ENCODE measurements at regions of chr10 and their contacts with region 1.

Region 1: GRCh38 chr10:4849555-4850242 is 23.7 kb downstream of the AKR1E2 start:
- DNase-seq: peak; percentile 94 to 97 (median 95)
- H3K4me3 ChIP-seq: peak overlapping the region in 2 of 7 experiments; percentile 48
- H3K27ac ChIP-seq: peak overlapping the region in 1 of 2 experiments; percentile 58
- H3K4me1 ChIP-seq: peaks cover 0 to 23% (median 12%) of the 10 kb centered on the region in 4 experiments
- H3K27me3 ChIP-seq: no peaks in the 10 kb centered on the region

Region 2: DNA sequence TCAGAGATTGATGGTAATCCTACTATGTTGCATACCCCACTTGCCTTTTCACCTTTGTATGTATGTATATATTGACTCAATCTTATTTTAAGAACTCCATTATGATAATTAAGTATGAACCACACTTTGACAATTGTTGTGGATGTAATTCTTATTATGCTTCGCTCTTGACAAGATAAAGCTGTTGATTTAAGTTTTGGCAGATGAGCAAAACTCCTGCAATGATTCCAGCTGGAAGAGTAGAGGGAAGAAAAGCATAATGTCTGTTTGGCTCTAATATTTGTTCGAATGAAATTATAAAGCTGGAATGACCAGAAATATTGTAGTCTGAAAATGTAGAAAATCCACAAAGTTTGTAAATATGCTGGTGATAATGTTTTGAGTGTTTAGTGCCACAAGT is 107.5 kb before region 1 on chr10:
- CTCF ChIA-PET with region 1: no interaction called
- POLR2A ChIA-PET with region 1: no interaction called
- DNase-seq: no peak
- H3K4me3 ChIP-seq: no peak overlapping the region
- H3K27ac ChIP-seq: no peak overlapping the region
- H3K4me1 ChIP-seq: no peaks in the 10 kb centered on the region
- H3K27me3 ChIP-seq: no peaks in the 10 kb centered on the region

Region 3: GRCh38 chr10:4830551-4830950 is 19.1 kb before region 1 on chr10:
- CTCF ChIA-PET with region 1: interaction called, 53 read pairs
- POLR2A ChIA-PET with region 1: no interaction called
- DNase-seq: no peak
- H3K4me3 ChIP-seq: no peak overlapping the region
- H3K27ac ChIP-seq: no peak overlapping the region
- H3K4me1 ChIP-seq: peaks cover 0 to 9% (median 7%) of the 10 kb centered on the region in 4 experiments
- H3K27me3 ChIP-seq: no peaks in the 10 kb centered on the region

Region 4: DNA sequence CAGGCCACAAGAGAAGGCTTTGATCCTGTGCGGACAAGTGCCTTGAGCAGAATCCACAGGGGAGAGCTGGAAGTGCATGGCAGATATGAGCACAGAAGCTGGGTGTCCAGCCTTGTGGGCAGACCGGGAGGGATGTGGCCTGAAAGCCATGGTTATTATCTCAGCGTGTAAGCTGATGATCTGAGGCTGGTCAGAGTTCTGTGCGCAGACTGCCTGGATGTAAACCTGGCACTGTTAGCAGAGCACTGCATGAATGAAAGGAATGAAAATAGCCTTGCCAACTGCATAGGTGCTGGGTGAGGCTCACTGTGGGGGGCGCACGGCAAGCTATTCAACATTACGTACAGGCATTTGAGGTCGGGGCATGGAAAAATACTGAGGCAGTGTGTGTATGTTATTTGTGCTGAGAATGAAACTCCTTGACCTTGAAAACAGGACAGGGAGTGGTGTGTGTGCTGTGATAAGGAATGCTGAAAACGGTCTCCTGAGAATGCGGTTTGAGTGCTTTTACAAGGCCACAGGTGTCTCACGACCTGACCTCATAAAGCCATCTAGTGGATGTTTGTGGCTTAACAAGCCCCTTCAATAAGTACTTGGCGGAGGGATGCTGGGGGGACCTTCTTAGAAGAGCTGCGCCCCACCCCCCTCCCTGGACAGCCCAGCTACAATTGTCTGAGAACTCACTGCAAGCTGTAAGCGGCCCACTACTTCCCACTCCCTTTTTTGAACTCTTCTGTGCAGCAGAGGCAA is 132.2 kb after region 1 on chr10:
- CTCF ChIA-PET with region 1: interaction called, 79 read pairs
- POLR2A ChIA-PET with region 1: no interaction called
- DNase-seq: peak; percentile 68 to 86 (median 80)
- H3K4me3 ChIP-seq: peak overlapping the region in 3 of 7 experiments; percentile 2 to 48 (median 26)
- H3K27ac ChIP-seq: no peak overlapping the region
- H3K4me1 ChIP-seq: peaks cover 0 to 8% (median 6%) of the 10 kb centered on the region in 4 experiments
- H3K27me3 ChIP-seq: no peaks in the 10 kb centered on the region

Region 5: DNA sequence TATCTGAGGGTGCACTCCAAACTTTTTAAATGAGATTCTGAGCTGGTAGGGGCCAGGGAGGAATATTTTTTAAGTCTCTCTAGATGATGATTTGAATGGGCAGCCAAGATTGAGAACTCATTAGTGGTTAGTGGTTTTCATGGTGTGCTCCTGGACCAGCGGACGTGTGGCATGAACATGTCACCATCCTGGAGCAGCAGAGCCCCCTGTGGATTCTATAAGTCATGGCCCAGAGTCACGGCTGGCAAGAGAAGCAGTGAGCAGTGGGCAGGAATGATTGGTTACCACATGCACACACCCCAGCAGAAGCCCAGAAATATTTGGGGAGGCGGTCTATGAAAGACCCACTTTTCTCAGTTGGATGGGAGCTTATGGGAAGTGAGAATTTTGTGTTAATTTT is 493.9 kb after region 1 on chr10:
- CTCF ChIA-PET with region 1: interaction called, 10 read pairs
- POLR2A ChIA-PET with region 1: no interaction called
- DNase-seq: peak; percentile 32 to 67 (median 59)
- H3K4me3 ChIP-seq: no peak overlapping the region
- H3K27ac ChIP-seq: no peak overlapping the region
- H3K4me1 ChIP-seq: no peaks in the 10 kb centered on the region
- H3K27me3 ChIP-seq: no peaks in the 10 kb centered on the region

Region 6: DNA sequence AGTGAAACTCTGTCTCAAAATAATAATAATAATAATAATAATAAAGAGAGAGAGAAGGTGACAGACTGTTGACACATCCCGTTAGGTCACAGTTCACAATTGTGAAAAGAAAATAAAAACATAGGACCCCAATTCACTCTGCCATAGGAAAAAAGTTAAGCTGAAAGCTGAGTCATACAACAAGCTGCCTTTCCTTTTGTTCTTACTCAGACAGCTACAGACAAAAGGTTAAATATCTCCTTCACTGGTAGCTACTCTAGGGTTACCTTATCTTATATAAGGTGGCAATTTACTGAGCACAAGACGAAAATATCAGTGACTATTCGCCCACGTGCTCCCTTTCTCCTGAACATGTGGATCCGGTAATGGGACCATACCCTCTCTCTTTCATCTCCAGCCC is 537.5 kb after region 1 on chr10:
- CTCF ChIA-PET with region 1: interaction called, 13 read pairs
- POLR2A ChIA-PET with region 1: no interaction called
- DNase-seq: no peak
- H3K4me3 ChIP-seq: no peak overlapping the region
- H3K27ac ChIP-seq: no peak overlapping the region
- H3K4me1 ChIP-seq: no peaks in the 10 kb centered on the region
- H3K27me3 ChIP-seq: no peaks in the 10 kb centered on the region

Region 7: GRCh38 chr10:5623081-5623748 is 773.5 kb after region 1 on chr10:
- CTCF ChIA-PET with region 1: interaction called, 14 read pairs
- POLR2A ChIA-PET with region 1: no interaction called
- DNase-seq: peak; percentile 74 to 82 (median 81)
- H3K4me3 ChIP-seq: peak overlapping the region in 1 of 7 experiments; percentile 25
- H3K27ac ChIP-seq: no peak overlapping the region
- H3K4me1 ChIP-seq: peaks cover 0 to 5% (median under 1%) of the 10 kb centered on the region in 4 experiments
- H3K27me3 ChIP-seq: no peaks in the 10 kb centered on the region

Measured in common myeloid progenitor, CD34-positive (primary cell).